ENCODE measurements at regions of chr5 and their contacts with region 1.

Region 1: GRCh38 chr5:177403792-177404640 is 3.6 kb upstream of the PFN3 start:
- DNase-seq: peak; percentile 88 to 93 (median 92)
- H3K4me3 ChIP-seq: peak overlapping the region; percentile 29 to 76 (median 61)
- H3K27ac ChIP-seq: peak overlapping the region in 1 of 2 experiments; percentile 49
- H3K4me1 ChIP-seq: peaks cover 2 to 55% (median 44%) of the 10 kb centered on the region in 4 experiments
- H3K27me3 ChIP-seq: peaks cover 0 to 40% (median 16%) of the 10 kb centered on the region in 5 experiments

Region 2: DNA sequence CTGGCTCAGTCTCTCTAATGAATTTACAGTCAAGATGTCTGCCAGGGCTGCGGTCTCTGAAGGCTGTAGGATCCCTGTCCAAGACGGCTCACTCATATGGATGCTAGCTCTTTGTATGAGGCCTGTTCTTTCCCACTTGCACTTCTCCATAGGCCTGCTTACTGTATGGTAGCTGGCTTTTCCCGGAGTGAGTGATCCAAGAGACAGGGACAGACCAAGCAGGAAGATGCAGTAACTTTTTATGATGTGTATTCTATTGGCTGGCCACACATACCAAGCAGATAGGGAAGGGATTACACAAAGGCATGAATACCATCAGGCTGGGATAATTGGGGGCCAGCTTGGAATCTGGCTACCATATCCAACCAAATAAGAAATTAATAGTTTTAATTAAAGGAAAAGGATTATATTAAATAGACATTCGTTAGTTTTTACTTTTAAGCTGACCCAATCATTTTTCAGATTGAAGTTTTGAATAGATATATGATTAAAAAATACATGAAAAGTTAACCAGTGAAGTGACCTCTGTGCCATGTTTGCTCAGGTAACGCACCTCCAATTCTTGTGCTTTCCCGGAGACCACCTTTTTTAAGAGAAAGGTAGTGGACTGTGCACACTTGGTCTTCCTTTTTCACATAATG is 249.9 kb before region 1 on chr5:
- CTCF ChIA-PET with region 1: no interaction called
- POLR2A ChIA-PET with region 1: no interaction called
- DNase-seq: no peak
- H3K4me3 ChIP-seq: no peak overlapping the region
- H3K27ac ChIP-seq: no peak overlapping the region
- H3K4me1 ChIP-seq: no peaks in the 10 kb centered on the region
- H3K27me3 ChIP-seq: no peaks in the 10 kb centered on the region

Region 3: DNA sequence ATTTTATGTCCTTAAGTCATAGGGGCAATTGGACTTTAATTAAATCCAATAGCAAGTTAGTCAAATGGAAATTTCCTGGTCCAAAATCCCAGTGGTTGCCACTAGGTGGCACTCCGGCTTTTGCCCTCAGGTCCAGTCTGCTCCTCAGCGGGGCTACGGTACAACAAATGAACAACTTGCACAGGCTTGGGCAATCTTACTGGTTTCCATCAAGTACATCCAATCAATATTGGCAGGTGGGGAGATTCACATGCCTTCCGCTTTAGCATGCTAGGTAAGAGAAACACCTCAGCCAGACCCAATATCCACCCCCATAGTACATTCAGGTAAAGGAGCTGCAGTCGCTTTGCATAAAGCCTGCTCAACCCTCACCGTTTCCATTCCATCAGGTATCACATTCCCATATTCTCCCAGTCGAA is 86.0 kb before region 1 on chr5:
- CTCF ChIA-PET with region 1: interaction called, 23 read pairs
- POLR2A ChIA-PET with region 1: no interaction called
- DNase-seq: peak; percentile 81 to 89 (median 83)
- H3K4me3 ChIP-seq: no peak overlapping the region
- H3K27ac ChIP-seq: no peak overlapping the region
- H3K4me1 ChIP-seq: peaks cover 4 to 25% (median 19%) of the 10 kb centered on the region in 4 experiments
- H3K27me3 ChIP-seq: no peaks in the 10 kb centered on the region

Region 4: DNA sequence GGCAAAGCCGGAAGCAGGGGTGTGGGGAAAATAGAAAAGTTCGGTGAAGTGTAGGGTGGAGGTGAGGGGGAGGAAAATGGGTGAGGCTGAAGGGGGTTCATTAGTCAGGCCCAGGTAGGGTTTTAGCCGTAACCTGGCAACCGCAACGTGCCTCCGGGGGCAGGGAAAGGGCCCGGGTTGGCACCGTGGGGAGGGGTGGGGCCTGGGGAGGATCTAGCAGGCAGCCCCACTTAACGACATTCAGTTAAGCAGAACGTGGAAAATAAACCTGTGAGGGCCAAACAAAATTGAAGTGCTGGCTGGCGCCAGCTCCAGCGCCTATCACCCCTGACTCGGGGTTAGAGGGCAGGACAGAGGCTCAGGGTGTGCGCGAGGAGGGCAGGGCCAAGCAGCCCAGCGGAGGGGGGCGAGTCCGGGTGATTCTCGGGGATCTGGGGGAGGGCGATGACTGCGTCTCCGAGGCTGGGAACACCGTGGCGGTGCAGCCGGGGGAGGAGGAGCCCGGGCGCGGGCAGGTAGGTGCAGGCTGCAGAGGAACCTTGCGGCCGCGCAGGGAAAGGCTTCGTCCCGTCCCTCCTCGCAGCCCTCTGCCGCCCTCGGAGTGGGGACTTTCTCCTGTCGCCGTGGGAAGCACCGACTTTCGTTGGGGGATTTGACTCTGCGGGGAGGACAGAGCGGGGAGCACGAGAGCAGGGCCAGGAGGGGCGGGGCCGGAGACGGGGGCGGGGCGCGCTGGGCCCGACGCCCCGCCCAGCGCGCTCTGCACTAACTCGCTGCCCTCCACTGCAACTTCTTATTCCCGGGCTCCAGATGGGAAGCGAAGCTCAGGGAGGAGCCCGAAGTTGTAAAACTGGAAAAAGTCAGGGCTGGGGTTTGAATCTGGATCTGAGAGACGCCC is 41.2 kb before region 1 on chr5:
- CTCF ChIA-PET with region 1: interaction called, 13 read pairs
- POLR2A ChIA-PET with region 1: no interaction called
- DNase-seq: peak in 2 of 3 donors; percentile 61 to 70
- H3K4me3 ChIP-seq: peak overlapping the region in 6 of 7 experiments; percentile 2 to 74 (median 42)
- H3K27ac ChIP-seq: peak overlapping the region in 1 of 2 experiments; percentile 58
- H3K4me1 ChIP-seq: peaks cover 0 to 71% (median 60%) of the 10 kb centered on the region in 4 experiments
- H3K27me3 ChIP-seq: no peaks in the 10 kb centered on the region

Region 5: GRCh38 chr5:177382423-177383029 is 21.5 kb before region 1 on chr5:
- CTCF ChIA-PET with region 1: interaction called, 226 read pairs
- POLR2A ChIA-PET with region 1: no interaction called
- DNase-seq: peak; percentile 69 to 78 (median 76)
- H3K4me3 ChIP-seq: no peak overlapping the region
- H3K27ac ChIP-seq: no peak overlapping the region
- H3K4me1 ChIP-seq: peaks cover 5 to 35% (median 28%) of the 10 kb centered on the region in 4 experiments
- H3K27me3 ChIP-seq: no peaks in the 10 kb centered on the region

Region 6: DNA sequence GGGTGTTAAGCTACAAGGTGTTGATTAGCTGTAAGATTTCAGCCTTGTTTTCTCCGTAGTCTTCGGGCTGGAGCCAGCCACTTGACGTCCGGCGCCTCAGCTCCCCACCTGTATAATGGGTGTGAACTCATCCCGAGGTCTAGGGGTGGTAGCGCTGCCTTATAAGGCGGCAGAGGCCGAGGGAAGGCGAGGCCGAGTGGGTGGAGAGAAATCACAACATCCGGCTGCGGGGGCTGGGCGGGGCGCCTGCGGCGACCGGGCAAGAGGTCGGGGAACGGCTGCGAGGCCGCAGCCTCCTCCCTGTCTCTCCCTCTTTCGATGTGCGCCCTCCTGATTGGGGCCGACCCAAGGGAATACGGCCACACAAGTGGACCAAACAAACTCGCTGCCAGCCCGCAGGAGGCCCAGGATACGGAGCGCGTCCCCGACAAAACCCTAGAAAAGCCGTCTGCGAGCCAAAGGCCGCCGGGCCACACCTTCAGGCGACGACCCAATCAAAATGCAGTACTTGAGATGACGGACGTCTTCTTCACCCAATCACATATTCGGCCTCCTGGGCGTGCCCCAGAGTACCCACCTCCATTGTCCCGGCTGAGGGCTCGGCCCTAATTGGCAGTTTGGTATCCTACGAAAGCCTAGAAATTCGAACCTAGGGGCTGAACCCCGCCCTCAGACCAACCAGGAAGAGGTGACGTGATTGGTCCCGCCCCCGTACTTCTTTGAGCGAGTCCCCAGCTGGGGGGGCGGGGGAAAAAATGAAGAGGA is 22.0 kb after region 1 on chr5:
- CTCF ChIA-PET with region 1: interaction called, 337 read pairs
- POLR2A ChIA-PET with region 1: interaction called, 19 read pairs
- DNase-seq: peak; percentile 100
- H3K4me3 ChIP-seq: peak overlapping the region; percentile 59 to 79 (median 71)
- H3K27ac ChIP-seq: peak overlapping the region; percentile 68 to 87
- H3K4me1 ChIP-seq: peaks cover 13 to 54% (median 50%) of the 10 kb centered on the region in 4 experiments
- H3K27me3 ChIP-seq: no peaks in the 10 kb centered on the region

Region 7: GRCh38 chr5:177454397-177455035 is 50.5 kb after region 1 on chr5:
- CTCF ChIA-PET with region 1: interaction called, 509 read pairs
- POLR2A ChIA-PET with region 1: interaction called, 59 read pairs
- DNase-seq: peak; percentile 88 to 92 (median 91)
- H3K4me3 ChIP-seq: peak overlapping the region; percentile 68 to 87 (median 77)
- H3K27ac ChIP-seq: peak overlapping the region in 1 of 2 experiments; percentile 68
- H3K4me1 ChIP-seq: peaks cover 0 to 40% (median 39%) of the 10 kb centered on the region in 4 experiments
- H3K27me3 ChIP-seq: no peaks in the 10 kb centered on the region

Measured in common myeloid progenitor, CD34-positive (primary cell).